Pancreas (tissue), 10 donors: ENCODE measurements at regions of chr12 and their contacts with region 1.

Region 1: DNA sequence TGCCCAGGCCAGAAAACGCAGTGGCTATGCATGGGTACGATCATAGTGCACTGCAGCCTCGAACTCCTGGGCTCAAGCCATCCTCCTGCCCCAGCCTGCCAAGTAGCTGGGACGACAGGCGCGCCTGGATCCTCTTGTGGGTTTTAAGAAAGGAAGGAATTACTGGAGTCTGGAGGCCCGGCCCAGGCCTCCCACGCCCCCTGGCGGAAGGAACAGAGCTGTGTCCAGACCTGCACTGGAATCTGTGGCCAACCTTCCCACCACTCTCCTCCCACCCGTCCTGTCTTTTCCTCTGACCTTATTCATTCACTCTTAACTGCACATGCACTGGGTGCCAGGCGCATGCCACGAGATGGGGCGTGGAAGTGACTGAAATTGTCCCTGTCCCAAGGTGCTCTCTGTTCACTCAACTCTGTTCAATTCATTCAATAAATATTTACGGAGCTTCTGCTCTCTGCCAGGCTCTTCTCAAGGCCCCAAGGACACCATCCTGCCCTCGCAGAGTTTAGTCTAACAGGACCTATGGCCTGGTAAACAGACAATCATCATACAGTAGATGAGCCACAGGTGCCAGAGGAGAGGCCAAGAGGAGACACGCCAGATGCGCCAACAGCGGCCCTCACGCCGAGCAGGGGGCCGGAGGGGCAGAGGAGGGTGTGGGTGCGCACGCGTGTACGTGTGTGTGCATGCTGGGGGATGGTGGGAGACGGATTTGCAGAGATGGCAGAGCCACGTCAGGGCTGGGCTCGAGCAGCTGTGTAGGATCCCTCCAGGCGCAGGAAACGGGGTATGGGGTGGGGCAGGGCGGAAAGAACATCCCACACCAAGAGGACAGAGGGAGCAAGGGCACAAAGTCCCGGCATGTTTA is 13.7 kb upstream of the TMEM106C start:
- DNase-seq: peak; percentile 56 to 89 (median 78)
- ATAC-seq: peak; percentile 95 to 99 (median 96)
- H3K4me3 ChIP-seq: no peak overlapping the region
- H3K27ac ChIP-seq: no peak overlapping the region
- H3K4me1 ChIP-seq: no peaks in the 10 kb centered on the region
- H3K27me3 ChIP-seq: no peaks in the 10 kb centered on the region
- CTCF ChIP-seq: peak; percentile 78 to 87 (median 82)

Region 2: GRCh38 chr12:47858511-47859266 is 91.0 kb before region 1 on chr12:
- intact Hi-C with region 1: no loop called
- DNase-seq: no peak
- ATAC-seq: no peak
- H3K4me3 ChIP-seq: no peak overlapping the region
- H3K27ac ChIP-seq: no peak overlapping the region
- H3K4me1 ChIP-seq: no peaks in the 10 kb centered on the region
- H3K27me3 ChIP-seq: no peaks in the 10 kb centered on the region
- CTCF ChIP-seq: no peak

Region 3: DNA sequence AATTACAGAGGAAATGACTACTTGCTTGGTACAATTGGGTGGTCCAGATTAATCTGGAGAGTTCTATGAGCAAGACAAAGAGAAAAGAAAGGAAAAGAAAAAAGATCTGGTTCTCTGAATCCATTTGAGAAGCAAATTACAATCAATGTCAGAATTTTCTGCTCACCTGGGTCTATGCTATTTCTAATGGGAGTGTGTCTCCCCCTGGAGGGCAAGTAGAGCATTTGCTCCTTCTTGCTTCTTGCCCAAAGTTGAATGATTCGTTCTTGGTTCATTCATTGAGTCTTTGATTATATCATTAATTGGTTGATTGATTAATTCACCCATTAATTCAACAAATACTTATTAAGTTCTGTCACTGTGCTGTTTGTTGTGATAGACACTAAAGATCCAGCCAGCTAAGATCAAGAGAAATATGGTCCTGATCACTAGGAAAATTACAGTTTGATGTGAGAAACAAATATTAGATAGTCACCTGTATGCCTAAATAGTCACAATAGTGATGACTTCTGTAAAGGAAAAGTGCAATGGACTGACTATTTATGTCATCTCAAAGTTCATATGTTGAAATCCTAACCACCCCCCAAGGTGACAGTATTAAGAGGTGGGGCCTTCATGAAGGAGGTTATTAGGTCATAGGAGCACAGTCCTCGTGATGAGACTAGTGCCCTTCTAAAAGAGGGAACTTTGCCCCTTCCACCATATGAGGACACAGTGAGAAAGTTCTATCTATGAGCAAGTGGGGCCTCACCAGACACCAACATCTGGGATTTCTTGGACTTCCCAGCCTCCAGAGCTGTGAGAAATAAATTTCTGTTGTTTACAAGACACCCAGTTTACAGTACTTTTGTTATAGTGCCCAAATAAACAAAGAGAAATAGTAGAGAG is 215.7 kb after region 1 on chr12:
- intact Hi-C with region 1: loop called in 1 of 3 experiments (anchors 10 kb)
- DNase-seq: peak in 3 of 6 donors; percentile 16 to 36 (median 30)
- ATAC-seq: peak in 3 of 4 donors; percentile 79 to 88 (median 86)
- H3K4me3 ChIP-seq: no peak overlapping the region
- H3K27ac ChIP-seq: no peak overlapping the region
- H3K4me1 ChIP-seq: no peaks in the 10 kb centered on the region
- H3K27me3 ChIP-seq: no peaks in the 10 kb centered on the region
- CTCF ChIP-seq: peak; percentile 64 to 88 (median 83)